Activated T-helper 2 cell treated with anti-CD3 and anti-CD28 coated beads, Interferon-gamma antibody, Interleukin-2, Interleukin-4, amounts not matched to agents 10 μg/mL and 5 μg/mL and 100 μg/mL, durations not matched to agents 14 hours and 24 hours and 36 hours (primary cell): ENCODE measurements at regions of chrX and their contacts with region 1.

Region 1: DNA sequence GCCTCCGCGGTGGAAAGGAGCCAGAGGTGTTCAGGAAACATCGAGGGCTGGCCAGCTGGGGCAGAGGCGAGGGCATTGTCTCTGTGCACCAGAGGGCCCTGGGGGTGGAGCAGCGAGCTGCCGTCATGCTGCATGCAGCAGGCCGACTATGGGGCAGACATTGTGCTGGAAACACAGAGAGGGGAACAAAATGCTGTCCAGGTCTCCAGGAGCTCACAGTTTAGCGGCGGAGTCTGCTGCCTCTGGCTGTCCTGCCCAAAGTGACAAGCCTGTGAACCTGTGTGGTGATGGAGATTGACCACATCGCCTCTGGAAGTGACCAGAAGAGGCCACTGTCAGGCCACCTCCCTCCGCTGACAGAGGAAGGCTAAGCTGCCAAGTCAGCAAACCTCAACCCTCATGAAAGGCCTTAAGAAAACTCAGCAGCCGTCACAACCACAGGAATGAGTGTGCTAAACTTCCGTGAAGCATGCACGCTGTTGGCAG is 20.1 kb upstream of the SASH3 start:
- DNase-seq: peak; percentile 52
- H3K4me3 Mint-ChIP-seq: no peak overlapping the region
- H3K27ac Mint-ChIP-seq: peak overlapping the region; percentile 86
- H3K4me1 Mint-ChIP-seq: peaks cover 42% of the 10 kb centered on the region
- H3K27me3 Mint-ChIP-seq: no peaks in the 10 kb centered on the region

Region 2: GRCh38 chrX:129737916-129738315 is 21.7 kb before region 1 on chrX:
- intact Hi-C with region 1: loop called (anchors 2 kb)
- DNase-seq: no peak
- H3K4me3 Mint-ChIP-seq: no peak overlapping the region
- H3K27ac Mint-ChIP-seq: peak overlapping the region; percentile 61
- H3K4me1 Mint-ChIP-seq: peaks cover 32% of the 10 kb centered on the region
- H3K27me3 Mint-ChIP-seq: no peaks in the 10 kb centered on the region

Region 3: GRCh38 chrX:129781134-129781672 is 21.6 kb after region 1 on chrX:
- intact Hi-C with region 1: loop called (anchors 2 kb)
- DNase-seq: peak; percentile 70
- H3K4me3 Mint-ChIP-seq: peak overlapping the region; percentile 82
- H3K27ac Mint-ChIP-seq: peak overlapping the region; percentile 88
- H3K4me1 Mint-ChIP-seq: peaks cover 59% of the 10 kb centered on the region
- H3K27me3 Mint-ChIP-seq: no peaks in the 10 kb centered on the region

Region 4: DNA sequence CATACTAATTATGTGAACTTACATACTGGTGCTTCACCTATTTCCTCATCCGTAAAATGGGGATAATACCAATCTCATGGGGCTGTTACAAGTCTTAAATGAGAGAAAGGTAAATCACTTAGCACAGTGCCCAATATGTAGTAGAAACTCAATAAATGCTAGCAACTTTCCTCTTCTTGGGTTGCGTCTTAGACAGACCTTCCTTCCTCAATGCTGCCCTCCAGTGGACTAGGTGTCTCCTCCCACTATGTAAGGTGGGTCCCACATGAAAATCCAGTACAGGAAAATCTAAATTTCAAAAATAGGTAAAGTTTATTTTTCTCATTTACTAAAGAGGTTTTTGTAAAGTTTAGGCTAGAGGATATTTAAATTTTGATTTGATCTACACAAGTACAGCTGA is 63.5 kb after region 1 on chrX:
- intact Hi-C with region 1: loop called (anchors 1 kb)
- DNase-seq: no peak
- H3K4me3 Mint-ChIP-seq: no peak overlapping the region
- H3K27ac Mint-ChIP-seq: peak overlapping the region; percentile 81
- H3K4me1 Mint-ChIP-seq: peaks cover 14% of the 10 kb centered on the region
- H3K27me3 Mint-ChIP-seq: no peaks in the 10 kb centered on the region

Region 5: DNA sequence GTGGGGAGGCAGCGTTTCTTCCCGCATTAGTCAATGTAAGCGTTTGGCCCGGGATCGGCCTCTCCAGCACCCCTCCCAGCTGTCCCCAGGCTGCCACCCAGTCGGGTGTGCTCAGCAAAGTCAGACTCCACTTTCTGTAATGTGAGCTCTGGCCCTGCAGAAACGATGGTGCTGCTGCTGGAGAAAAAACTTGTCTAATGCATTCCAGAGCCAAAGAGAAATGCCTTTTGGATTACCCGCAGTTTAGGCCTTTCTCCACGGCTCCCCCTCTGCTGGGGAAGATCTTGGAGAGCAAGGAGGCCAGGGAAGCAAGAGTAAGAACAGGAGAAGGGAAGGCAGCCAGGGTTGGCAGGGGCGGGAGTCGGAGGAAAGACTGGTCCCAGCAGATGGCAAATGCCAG is 295.5 kb after region 1 on chrX:
- intact Hi-C with region 1: no loop called
- DNase-seq: no peak
- H3K4me3 Mint-ChIP-seq: no peak overlapping the region
- H3K27ac Mint-ChIP-seq: no peak overlapping the region
- H3K4me1 Mint-ChIP-seq: peaks cover 2% of the 10 kb centered on the region
- H3K27me3 Mint-ChIP-seq: no peaks in the 10 kb centered on the region